RWPE1 (cell line): ENCODE measurements at regions of chr17 and their contacts with region 1.

Region 1: DNA sequence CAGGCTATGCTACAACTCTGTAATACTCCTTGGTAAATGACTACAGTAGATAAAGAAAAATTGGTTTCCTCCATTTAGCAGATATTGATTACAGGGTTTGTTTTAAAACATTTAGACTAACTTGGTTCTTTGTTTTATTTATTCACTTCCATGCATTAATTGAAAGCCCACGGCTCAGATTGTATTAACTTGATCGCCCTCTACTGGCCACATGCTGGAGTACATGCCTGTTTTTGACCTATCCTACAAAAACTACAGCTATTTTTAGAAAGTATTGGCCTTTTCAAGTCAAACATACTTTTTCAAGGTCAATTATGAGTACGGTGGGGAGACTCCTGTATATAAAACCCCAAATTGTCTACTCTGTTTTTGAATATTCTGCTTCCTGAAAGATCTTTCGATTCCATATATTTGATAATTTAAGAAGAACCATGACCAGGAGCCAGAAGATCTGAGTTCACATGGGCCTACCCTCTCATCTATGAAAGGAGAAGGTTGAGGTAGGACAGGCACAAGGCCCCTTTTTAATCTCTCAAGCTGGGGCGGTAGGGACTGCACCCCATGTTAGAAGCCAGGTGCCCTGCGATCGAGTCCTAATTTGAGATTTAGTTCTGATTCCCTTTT is 51.8 kb downstream of the CA10 start:
- DNase-seq: peak; percentile 59
- H3K27ac ChIP-seq: no peak overlapping the region
- CTCF ChIP-seq: peak; percentile 87

Region 2: GRCh38 chr17:51764387-51764972 is 342.3 kb before region 1 on chr17:
- CTCF ChIA-PET with region 1: interaction called, 16 read pairs
- POLR2A ChIA-PET with region 1: no interaction called
- DNase-seq: peak; percentile 75
- H3K27ac ChIP-seq: no peak overlapping the region
- CTCF ChIP-seq: peak; percentile 92